ENCODE measurements at regions of chr17 and their contacts with region 1.

Region 1: GRCh38 chr17:17694169-17695081 is 13.2 kb downstream of the RAI1 start:
- DNase-seq: peak; percentile 41 to 63
- ATAC-seq: peak; percentile 76 to 77
- H3K4me3 ChIP-seq: peak overlapping the region; percentile 71 to 95 (median 88)
- H3K27ac ChIP-seq: peak overlapping the region; percentile 88 to 99 (median 96)
- H3K4me1 ChIP-seq: peaks cover 54 to 65% of the 10 kb centered on the region in 2 donors
- H3K27me3 ChIP-seq: no peaks in the 10 kb centered on the region
- CTCF ChIP-seq: no peak
- POLR2A ChIP-seq: peak; percentile 76 to 81

Region 2: DNA sequence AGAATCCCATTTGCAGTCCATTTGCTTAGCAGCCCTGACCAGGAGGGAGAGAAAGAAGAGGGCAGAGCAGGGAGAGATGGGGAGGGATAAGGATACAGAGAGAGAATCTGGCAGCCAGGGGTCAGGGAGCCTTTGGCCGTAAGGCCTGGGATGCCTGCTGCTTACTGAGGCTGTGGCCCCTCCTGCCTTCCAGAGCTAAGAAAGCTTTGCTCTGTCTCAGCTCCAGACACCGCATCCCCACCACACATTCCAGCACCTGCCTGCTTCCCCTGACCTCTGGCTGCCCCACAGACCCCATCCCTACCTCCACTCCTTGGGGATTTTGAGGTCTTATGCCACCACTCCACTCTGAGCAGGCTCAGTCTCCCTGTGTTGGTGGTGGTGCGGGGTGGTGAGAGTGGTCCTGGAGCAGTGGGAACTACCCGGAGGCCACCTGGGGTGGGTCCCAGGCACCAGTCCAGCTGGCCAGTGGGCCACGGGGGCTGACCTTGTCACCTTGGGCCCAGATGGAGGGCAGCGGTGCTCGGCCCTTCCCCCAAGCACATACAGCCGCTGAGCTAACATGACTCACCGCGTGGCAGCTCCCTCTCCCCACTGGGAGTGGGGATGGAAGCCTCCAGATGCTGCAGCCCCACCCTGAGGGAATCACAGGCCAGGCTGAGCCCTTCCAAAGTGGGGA is 45.1 kb after region 1 on chr17:
- in situ Hi-C with region 1: no loop called
- intact Hi-C with region 1: loop called (anchors 5 kb)
- DNase-seq: no peak
- ATAC-seq: peak; percentile 37 to 43
- H3K4me3 ChIP-seq: no peak overlapping the region
- H3K27ac ChIP-seq: no peak overlapping the region
- H3K4me1 ChIP-seq: peaks cover 25 to 26% of the 10 kb centered on the region in 2 donors
- H3K27me3 ChIP-seq: no peaks in the 10 kb centered on the region
- CTCF ChIP-seq: no peak
- POLR2A ChIP-seq: no peak

Region 3: DNA sequence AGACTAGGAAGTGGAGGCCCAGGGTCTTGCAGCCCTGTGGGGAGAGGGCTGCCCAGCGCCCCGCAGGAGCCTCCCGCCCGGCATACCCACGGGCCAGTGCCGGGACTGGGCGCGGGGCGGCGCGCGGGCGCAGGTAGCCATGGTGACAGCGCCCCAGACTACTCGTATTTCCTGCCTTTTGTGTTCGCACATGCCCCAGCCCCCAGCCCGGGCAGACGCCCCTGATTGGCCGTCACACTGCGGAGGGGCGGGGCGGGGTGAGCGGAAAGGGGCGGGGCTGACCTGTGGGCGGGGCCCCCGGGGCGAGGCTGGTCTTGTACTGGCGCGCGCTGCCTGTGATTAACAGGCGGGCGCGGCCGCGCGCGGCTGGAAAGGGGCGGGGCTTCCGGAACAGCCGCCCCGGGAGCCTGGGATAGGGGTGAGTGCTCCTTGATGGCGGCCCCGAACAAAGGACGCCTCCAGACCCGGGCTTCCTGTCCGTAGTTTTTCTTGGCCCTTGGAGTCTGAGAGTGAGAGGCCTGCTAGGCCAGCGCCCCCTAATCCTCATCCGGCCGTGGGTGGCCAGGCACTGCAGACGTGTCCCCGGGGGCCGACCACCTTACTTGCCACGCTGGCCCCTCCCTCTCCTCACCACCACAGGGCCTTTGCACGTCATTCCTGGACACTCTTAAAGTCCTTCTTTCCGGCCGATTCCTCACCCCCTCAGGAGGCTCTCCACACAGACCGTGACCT is 57.8 kb after region 1 on chr17:
- in situ Hi-C with region 1: no loop called
- intact Hi-C with region 1: loop called (anchors 2 kb)
- DNase-seq: peak; percentile 92 to 95
- ATAC-seq: peak; percentile 84 to 87
- H3K4me3 ChIP-seq: peak overlapping the region; percentile 49 to 72 (median 66)
- H3K27ac ChIP-seq: peak overlapping the region; percentile 77 to 91 (median 88)
- H3K4me1 ChIP-seq: peaks cover 16 to 24% of the 10 kb centered on the region in 2 donors
- H3K27me3 ChIP-seq: no peaks in the 10 kb centered on the region
- CTCF ChIP-seq: peak in 1 of 5 experiments; percentile 32
- POLR2A ChIP-seq: peak; percentile 67 to 75

Region 4: GRCh38 chr17:17849845-17850373 is 155.5 kb after region 1 on chr17:
- in situ Hi-C with region 1: loop called in 3 of 4 experiments (anchors 25 kb)
- intact Hi-C with region 1: loop called (anchors 5 kb)
- DNase-seq: peak; percentile 51 to 83
- ATAC-seq: peak; percentile 74 to 81
- H3K4me3 ChIP-seq: no peak overlapping the region
- H3K27ac ChIP-seq: peak overlapping the region; percentile 82 to 89 (median 84)
- H3K4me1 ChIP-seq: peaks cover 24 to 29% of the 10 kb centered on the region in 2 donors
- H3K27me3 ChIP-seq: no peaks in the 10 kb centered on the region
- CTCF ChIP-seq: peak; percentile 30 to 45 (median 36)
- POLR2A ChIP-seq: peak; percentile 34 to 44

Measured in gastrocnemius medialis (tissue), 4 donors.